Naive thymus-derived CD4-positive, alpha-beta T cell (primary cell): ENCODE measurements at regions of chr13 and their contacts with region 1.

Region 1: GRCh38 chr13:60431108-60431700 is 34.2 kb downstream of the TDRD3 start:
- DNase-seq: peak in 6 of 9 donors; percentile 27 to 64 (median 53)
- ATAC-seq: peak; percentile 87
- H3K4me3 ChIP-seq: no peak overlapping the region
- H3K4me3 Mint-ChIP-seq: no peak overlapping the region
- H3K27ac ChIP-seq: no peak overlapping the region
- H3K27ac Mint-ChIP-seq: no peak overlapping the region
- H3K4me1 ChIP-seq: peaks cover 0 to 20% of the 10 kb centered on the region in 2 donors
- H3K4me1 Mint-ChIP-seq: peaks cover 12 to 31% (median 18%) of the 10 kb centered on the region in 7 donors
- H3K27me3 ChIP-seq: no peaks in the 10 kb centered on the region
- H3K27me3 Mint-ChIP-seq: no peaks in the 10 kb centered on the region

Region 2: DNA sequence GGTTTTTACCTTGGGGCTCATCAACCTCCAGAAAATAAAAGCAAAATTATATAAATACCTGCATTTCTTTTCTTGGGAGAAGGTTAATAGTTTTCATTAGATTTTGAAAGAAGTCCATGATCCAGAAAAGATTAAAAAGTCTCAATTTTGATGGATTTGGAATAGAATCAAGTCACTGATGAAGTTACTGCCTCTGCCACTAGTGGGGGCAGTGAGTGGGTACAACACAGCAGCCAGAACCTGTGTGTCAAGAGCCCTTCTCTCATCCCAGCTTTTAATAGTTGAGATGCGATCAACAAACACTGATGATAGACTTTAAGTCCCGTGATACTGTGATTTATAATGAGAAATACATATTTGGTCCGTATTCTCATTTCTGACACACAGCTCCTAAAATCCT is 954.2 kb before region 1 on chr13:
- CTCF ChIA-PET with region 1: no interaction called
- POLR2A ChIA-PET with region 1: no interaction called
- intact Hi-C with region 1: loop called in 1 of 2 experiments (anchors 10 kb)
- DNase-seq: no peak
- ATAC-seq: no peak
- H3K4me3 ChIP-seq: no peak overlapping the region
- H3K4me3 Mint-ChIP-seq: no peak overlapping the region
- H3K27ac ChIP-seq: no peak overlapping the region
- H3K27ac Mint-ChIP-seq: no peak overlapping the region
- H3K4me1 ChIP-seq: no peaks in the 10 kb centered on the region
- H3K4me1 Mint-ChIP-seq: peaks cover 0 to 1% (median 0%) of the 10 kb centered on the region in 7 donors
- H3K27me3 ChIP-seq: no peaks in the 10 kb centered on the region
- H3K27me3 Mint-ChIP-seq: peaks cover 0 to 9% (median 0%) of the 10 kb centered on the region in 5 donors

Region 3: GRCh38 chr13:59677966-59678814 is 753.0 kb before region 1 on chr13:
- CTCF ChIA-PET with region 1: interaction called, 5 read pairs
- POLR2A ChIA-PET with region 1: no interaction called
- intact Hi-C with region 1: loop called (anchors 1 kb)
- DNase-seq: peak in 5 of 9 donors; percentile 21 to 34 (median 22)
- ATAC-seq: peak; percentile 67
- H3K4me3 ChIP-seq: no peak overlapping the region
- H3K4me3 Mint-ChIP-seq: no peak overlapping the region
- H3K27ac ChIP-seq: no peak overlapping the region
- H3K27ac Mint-ChIP-seq: peak overlapping the region in 1 of 9 donors; percentile 48
- H3K4me1 ChIP-seq: no peaks in the 10 kb centered on the region
- H3K4me1 Mint-ChIP-seq: peaks cover 0 to 5% (median under 1%) of the 10 kb centered on the region in 7 donors
- H3K27me3 ChIP-seq: no peaks in the 10 kb centered on the region
- H3K27me3 Mint-ChIP-seq: no peaks in the 10 kb centered on the region

Region 4: DNA sequence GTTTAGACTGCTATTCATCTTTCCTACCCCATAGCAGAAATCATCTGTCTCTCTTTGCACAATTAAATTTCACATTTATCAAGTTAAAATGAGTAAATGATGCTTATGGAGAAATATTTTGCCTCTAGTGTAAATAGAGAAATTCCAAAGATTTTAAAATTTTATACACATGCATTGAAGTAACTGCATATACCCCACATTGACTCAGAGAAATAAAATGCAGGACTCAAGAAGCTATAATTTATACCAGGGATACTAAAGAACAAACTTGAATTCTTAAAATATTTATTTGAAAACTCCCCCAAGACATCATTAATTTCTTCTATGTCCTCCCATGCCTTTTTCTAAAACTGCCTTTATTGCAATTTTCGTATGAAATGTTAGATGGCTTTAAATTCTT is 433.2 kb before region 1 on chr13:
- CTCF ChIA-PET with region 1: no interaction called
- POLR2A ChIA-PET with region 1: no interaction called
- intact Hi-C with region 1: loop called in 1 of 2 experiments (anchors 10 kb)
- DNase-seq: no peak
- ATAC-seq: no peak
- H3K4me3 ChIP-seq: no peak overlapping the region
- H3K4me3 Mint-ChIP-seq: no peak overlapping the region
- H3K27ac ChIP-seq: no peak overlapping the region
- H3K27ac Mint-ChIP-seq: no peak overlapping the region
- H3K4me1 ChIP-seq: no peaks in the 10 kb centered on the region
- H3K4me1 Mint-ChIP-seq: peaks cover 0 to 5% (median 0%) of the 10 kb centered on the region in 7 donors
- H3K27me3 ChIP-seq: no peaks in the 10 kb centered on the region
- H3K27me3 Mint-ChIP-seq: no peaks in the 10 kb centered on the region

Region 5: GRCh38 chr13:60335531-60335930 is 95.7 kb before region 1 on chr13:
- CTCF ChIA-PET with region 1: interaction called, 6 read pairs
- POLR2A ChIA-PET with region 1: no interaction called
- intact Hi-C with region 1: loop called (anchors 1 to 5 kb)
- DNase-seq: peak in 3 of 9 donors; percentile 3 to 8 (median 4)
- ATAC-seq: no peak
- H3K4me3 ChIP-seq: no peak overlapping the region
- H3K4me3 Mint-ChIP-seq: no peak overlapping the region
- H3K27ac ChIP-seq: no peak overlapping the region
- H3K27ac Mint-ChIP-seq: no peak overlapping the region
- H3K4me1 ChIP-seq: no peaks in the 10 kb centered on the region
- H3K4me1 Mint-ChIP-seq: no peaks in the 10 kb centered on the region
- H3K27me3 ChIP-seq: no peaks in the 10 kb centered on the region
- H3K27me3 Mint-ChIP-seq: peaks cover 6 to 16% (median 11%) of the 10 kb centered on the region in 5 donors

Region 6: DNA sequence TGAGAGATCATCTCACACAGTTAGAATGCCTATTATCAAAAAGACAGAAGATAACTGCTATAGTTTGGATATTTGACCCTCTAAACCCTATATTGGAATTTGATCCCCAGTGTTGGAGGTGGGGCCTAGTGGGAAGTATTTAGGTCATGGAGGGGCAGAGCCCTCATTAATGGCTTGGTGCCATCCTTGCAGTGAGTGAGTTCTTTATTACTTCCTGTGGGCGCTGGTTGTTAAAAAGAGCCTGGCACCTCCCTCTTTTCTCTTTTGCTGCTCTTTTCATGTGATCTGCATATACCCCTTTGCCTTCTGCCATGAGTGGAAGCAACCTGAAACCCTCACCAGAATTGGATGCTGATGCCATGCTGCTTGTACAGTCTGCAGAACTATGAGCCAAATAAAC is 32.6 kb after region 1 on chr13:
- CTCF ChIA-PET with region 1: no interaction called
- POLR2A ChIA-PET with region 1: no interaction called
- intact Hi-C with region 1: no loop called
- DNase-seq: no peak
- ATAC-seq: no peak
- H3K4me3 ChIP-seq: no peak overlapping the region
- H3K4me3 Mint-ChIP-seq: no peak overlapping the region
- H3K27ac ChIP-seq: no peak overlapping the region
- H3K27ac Mint-ChIP-seq: peak overlapping the region in 1 of 9 donors; percentile 45
- H3K4me1 ChIP-seq: no peaks in the 10 kb centered on the region
- H3K4me1 Mint-ChIP-seq: peaks cover 0 to 3% (median 0%) of the 10 kb centered on the region in 7 donors
- H3K27me3 ChIP-seq: no peaks in the 10 kb centered on the region
- H3K27me3 Mint-ChIP-seq: no peaks in the 10 kb centered on the region

Region 7: DNA sequence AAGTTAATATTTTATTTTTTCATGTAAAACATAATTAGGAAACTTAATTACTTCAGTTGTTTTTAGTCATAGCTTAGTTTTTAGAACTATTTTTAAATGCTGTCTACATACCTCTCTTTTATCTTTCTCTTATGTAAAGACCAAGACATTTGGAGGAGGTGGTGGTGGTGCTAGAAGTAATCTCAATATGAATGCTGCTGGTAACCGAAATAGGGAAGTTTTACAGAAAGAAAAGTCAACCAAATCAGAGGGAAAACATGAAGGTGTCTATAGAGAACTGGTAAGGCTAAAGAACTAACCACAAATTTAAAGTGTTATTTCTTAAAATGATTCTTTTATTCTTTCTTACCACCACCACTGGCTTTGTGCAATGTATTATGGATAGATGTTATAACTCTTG is 63.1 kb after region 1 on chr13:
- CTCF ChIA-PET with region 1: no interaction called
- POLR2A ChIA-PET with region 1: no interaction called
- intact Hi-C with region 1: no loop called
- DNase-seq: no peak
- ATAC-seq: no peak
- H3K4me3 ChIP-seq: no peak overlapping the region
- H3K4me3 Mint-ChIP-seq: no peak overlapping the region
- H3K27ac ChIP-seq: no peak overlapping the region
- H3K27ac Mint-ChIP-seq: no peak overlapping the region
- H3K4me1 ChIP-seq: no peaks in the 10 kb centered on the region
- H3K4me1 Mint-ChIP-seq: peaks cover 0 to 6% (median 0%) of the 10 kb centered on the region in 7 donors
- H3K27me3 ChIP-seq: no peaks in the 10 kb centered on the region
- H3K27me3 Mint-ChIP-seq: no peaks in the 10 kb centered on the region